Cardiac septum (tissue), 1 donor: ENCODE measurements at regions of chr4 and their contacts with region 1.

Region 1: DNA sequence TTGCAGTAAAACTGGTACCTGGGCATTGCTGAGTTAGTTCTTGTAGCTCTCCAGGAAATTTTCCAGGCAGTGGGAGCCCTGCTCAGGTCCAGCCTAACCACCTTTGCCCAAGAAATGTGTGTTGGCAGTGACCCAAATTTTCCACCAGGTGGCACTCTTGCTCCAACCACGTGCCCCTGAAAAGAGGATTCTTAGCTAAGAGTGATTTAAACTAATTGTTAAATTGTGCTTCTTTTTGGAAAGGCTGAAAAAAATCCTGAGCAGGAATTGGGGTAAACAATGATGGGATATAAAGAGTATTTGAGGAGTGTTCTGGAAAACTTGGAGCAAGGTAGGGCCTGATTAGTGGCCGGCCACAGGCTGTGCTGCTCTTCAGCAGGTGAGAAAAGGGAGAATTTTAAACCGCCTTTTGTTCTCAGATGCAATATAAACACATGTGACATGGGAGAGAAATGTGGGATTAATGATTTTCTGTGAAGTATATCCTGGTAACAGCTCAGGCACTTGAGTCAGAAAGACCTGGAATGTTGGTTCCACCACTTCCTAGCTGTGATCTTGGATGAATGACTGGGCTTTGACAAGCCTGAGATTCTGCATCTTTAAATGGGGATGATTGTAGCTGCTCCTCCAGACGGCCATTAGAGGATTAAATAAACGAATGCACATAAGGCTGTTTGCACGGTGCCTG is 219.6 kb downstream of the PTTG2 start:
- DNase-seq: peak; percentile 87

Region 2: GRCh38 chr4:38062088-38062893 is 117.5 kb before region 1 on chr4:
- intact Hi-C with region 1: loop called (anchors 2 kb)
- DNase-seq: no peak

Region 3: GRCh38 chr4:38730830-38731646 is 551.2 kb after region 1 on chr4:
- intact Hi-C with region 1: loop called (anchors 1 kb)
- DNase-seq: peak; percentile 94